Sigmoid colon (tissue), 7 donors: ENCODE measurements at regions of chr2 and their contacts with region 1.

Region 1: DNA sequence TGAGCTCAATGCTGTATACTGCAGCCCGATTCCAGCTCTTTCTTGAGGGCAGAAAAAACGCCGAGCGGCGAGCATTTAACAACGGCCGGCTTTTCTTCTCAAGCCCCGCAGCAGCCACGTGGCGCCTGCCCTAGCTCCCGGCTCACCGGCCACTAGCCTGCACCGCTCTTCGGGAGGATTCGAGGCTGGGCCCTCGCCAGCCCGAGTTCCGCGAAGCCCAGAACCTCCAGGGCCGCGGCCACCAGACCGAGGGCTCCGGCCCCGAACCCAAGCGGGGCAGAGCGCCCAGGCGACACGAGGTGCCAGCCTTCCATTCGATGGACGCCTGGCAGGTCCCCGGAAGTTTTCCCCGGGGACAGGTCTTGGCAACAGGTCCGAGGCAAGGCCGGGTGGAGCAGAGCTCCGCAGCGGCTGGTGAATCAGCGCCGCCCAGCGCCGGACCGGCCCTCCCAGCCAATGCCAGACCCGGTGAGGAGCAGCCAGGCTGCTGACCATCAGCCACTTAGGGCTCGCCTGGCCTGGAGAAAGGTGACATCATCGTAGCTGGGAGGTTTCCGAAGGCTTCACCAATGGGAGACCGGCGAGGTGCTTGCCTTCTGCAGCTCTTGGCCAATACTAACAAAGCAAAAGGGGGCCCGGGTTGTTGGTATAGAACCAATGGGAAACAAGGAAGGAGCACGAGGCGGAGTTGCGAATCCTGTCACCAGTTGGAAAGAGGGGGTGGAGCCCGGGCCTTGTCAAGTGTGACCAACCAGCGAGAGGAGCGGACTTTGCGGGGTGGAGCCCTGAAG is 544 bp upstream of the MXD1 start:
- DNase-seq: peak; percentile 100
- H3K4me3 ChIP-seq: peak overlapping the region; percentile 48 to 94 (median 90)
- H3K27ac ChIP-seq: peak overlapping the region; percentile 96 to 98 (median 98)
- H3K4me1 ChIP-seq: peaks cover 0 to 43% (median 22%) of the 10 kb centered on the region in 4 donors
- H3K27me3 ChIP-seq: no peaks in the 10 kb centered on the region
- CTCF ChIP-seq: no peak
- EP300 ChIP-seq: peak in 1 of 4 donors; percentile 1
- POLR2A ChIP-seq: peak; percentile 89 to 90

Region 2: GRCh38 chr2:69436938-69437750 is 477.2 kb before region 1 on chr2 and contains the start of gene NFU1:
- intact Hi-C with region 1: loop called (anchors 5 kb)
- DNase-seq: peak; percentile 98
- H3K4me3 ChIP-seq: peak within 1 kb of the TSS; percentile 77 to 92 (median 84)
- H3K27ac ChIP-seq: peak within 1 kb of the TSS; percentile 94 to 96 (median 94)
- H3K4me1 ChIP-seq: peaks cover 0 to 31% (median 22%) of the 10 kb centered on the region in 4 donors
- H3K27me3 ChIP-seq: no peaks in the 10 kb centered on the region
- CTCF ChIP-seq: peak; percentile 61 to 70 (median 65)
- EP300 ChIP-seq: peak in 1 of 4 donors; percentile 45
- POLR2A ChIP-seq: peak; percentile 54 to 71
- total RNA-seq, gene NFU1: 43.2 to 91.4 (median 74.2) TPM

Region 3: GRCh38 chr2:69817729-69818501 is 96.5 kb before region 1 on chr2:
- intact Hi-C with region 1: no loop called
- DNase-seq: no peak
- H3K4me3 ChIP-seq: no peak overlapping the region
- H3K27ac ChIP-seq: no peak overlapping the region
- H3K4me1 ChIP-seq: no peaks in the 10 kb centered on the region
- H3K27me3 ChIP-seq: no peaks in the 10 kb centered on the region
- CTCF ChIP-seq: no peak
- EP300 ChIP-seq: no peak
- POLR2A ChIP-seq: no peak

Region 4: DNA sequence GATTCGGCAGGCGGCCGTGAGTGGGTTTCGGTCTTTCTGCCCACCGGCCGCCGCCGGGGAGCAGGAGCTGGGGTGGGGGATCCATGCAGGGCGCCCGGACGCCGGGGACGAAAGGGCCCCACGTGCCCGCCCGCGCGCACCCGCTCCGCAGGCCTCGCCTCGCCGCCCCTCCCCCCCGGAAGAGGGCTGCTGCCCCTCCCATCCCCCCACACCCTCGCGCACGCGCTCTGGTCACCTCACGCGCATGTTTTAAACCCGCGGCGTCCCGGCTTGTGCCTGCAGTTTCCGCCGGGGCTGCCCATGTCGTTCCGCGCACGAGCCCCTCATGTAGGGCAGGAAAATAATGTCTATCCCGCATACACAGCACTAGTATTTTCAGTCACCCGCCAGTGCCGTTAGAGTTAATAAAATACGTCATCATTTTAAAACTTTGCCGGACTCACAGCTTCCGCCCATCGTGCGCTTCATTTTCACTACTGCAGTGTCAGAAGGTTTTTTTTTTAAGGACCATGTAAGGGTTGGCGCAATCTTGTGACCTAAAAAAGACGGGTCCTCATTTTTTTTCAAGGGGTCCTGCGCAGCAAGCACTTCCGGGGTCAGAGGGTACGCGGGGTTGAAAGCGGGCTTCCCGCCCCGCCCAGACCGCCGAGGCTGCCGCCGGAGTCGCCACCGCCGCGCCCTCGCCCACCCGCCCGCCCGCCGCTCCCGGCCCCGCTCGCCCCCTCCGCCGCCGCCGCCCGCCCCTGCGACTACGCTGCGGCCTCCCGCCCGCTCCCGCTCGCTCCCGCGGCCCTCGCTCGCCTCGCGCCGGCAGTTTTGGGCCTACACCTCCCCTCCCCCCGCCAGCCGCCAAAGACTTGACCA is 172.7 kb after region 1 on chr2 and contains the start of gene PCBP1:
- intact Hi-C with region 1: loop called (anchors 5 kb)
- DNase-seq: peak; percentile 98
- H3K4me3 ChIP-seq: peak within 1 kb of the TSS; percentile 63 to 87 (median 72)
- H3K27ac ChIP-seq: peak within 1 kb of the TSS; percentile 99 to 100 (median 99)
- H3K4me1 ChIP-seq: peaks cover 0 to 54% (median 47%) of the 10 kb centered on the region in 4 donors
- H3K27me3 ChIP-seq: no peaks in the 10 kb centered on the region
- CTCF ChIP-seq: no peak
- EP300 ChIP-seq: peak in 2 of 4 donors; percentile 22 to 28
- POLR2A ChIP-seq: peak; percentile 91 to 95
- total RNA-seq, gene PCBP1: 178 to 186 (median 182) TPM

Region 5: DNA sequence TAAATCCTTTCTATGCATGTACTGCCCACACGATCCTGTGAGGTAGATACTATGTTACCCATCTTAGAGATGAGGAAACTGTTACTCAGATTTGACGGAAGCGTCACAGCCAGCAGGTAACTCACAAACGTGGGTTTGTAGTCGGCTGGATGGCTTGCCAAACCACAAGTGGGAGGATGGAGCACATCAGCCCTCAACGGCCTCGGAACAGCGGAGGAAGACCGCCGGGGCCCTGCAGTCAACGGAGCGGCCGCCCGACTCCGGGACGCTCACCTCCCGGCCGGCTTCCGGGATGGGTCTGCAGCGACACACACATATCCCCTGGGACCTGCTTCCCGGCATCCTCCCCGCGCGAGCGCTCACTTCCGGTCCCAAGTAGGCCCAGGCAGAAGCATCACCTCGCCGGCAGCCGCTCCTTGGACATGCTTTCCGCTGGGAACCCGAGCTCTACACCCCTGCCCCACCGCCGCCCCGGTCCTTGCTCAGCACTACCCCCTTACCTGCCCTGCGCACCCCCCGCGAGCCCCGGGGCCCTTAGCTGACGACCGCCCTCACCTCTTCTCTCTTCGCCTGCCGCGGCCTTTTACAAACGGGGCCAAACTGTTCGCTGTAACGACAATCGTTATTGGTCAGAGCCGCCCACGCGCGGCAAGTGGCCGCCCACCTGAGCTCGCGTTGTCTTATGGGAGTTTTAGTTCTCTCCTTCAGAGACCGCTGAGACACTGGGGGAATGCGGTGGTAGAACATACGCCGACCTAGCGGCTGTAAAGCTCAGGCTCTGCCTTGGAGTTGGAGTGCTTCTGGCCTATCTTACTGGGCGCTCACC is 276.3 kb after region 1 on chr2 and contains the start of gene C2orf42:
- intact Hi-C with region 1: loop called (anchors 1 kb)
- DNase-seq: peak; percentile 98
- H3K4me3 ChIP-seq: peak within 1 kb of the TSS; percentile 77 to 91 (median 81)
- H3K27ac ChIP-seq: peak within 1 kb of the TSS; percentile 95 to 98 (median 96)
- H3K4me1 ChIP-seq: peaks cover 0 to 11% (median 5%) of the 10 kb centered on the region in 4 donors
- H3K27me3 ChIP-seq: no peaks in the 10 kb centered on the region
- CTCF ChIP-seq: no peak
- EP300 ChIP-seq: peak in 1 of 4 donors; percentile 18
- POLR2A ChIP-seq: peak; percentile 98 to 99
- total RNA-seq, gene C2orf42: 8.8 to 24.3 (median 21.8) TPM

Region 6: DNA sequence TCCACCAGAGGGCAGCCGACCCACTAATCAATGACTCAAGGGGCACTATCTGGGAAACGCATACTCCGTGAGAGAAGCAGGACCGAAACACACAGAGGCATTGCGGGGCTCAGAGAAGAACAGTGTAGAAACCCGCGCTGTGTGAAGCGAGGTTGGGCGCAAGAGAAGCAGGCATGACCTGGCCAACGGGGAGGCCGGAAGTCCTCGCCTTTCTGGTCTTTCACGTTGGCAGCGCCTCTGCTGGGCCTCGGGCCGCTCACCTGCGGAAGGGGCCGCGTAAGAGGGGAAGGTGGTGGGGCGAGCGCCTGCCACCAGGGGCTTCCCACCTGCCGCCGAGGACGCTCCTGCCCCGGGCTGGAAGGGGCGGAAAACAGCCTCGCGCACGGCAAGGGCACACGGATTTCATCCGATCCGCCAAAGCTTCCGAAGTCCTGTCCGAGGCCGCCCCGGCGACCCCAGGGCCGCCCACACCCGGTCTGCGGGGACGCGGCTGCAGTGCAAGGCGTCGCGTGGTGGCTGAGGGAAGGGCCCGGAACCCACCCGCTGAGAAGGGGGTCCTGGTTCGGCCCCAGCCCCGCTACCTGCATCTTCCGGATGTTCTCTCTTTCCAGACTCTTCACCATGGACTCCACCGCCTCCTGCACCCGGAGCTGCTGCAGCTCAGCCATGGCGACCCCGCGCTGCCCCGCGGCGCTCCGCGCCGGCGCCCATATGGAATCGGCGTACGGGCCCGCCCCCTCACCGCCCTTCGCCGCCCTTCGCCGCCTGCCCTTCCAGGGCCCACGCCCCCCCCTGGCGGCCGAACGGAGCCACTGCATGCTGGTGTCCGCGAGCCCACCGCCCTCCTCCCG is 387.2 kb after region 1 on chr2 and contains the start of gene FAM136A:
- intact Hi-C with region 1: loop called (anchors 5 kb)
- DNase-seq: peak; percentile 91
- H3K4me3 ChIP-seq: peak within 1 kb of the TSS; percentile 68 to 98 (median 90)
- H3K27ac ChIP-seq: peak within 1 kb of the TSS; percentile 81 to 90 (median 83)
- H3K4me1 ChIP-seq: peaks cover 0 to 22% (median 14%) of the 10 kb centered on the region in 4 donors
- H3K27me3 ChIP-seq: no peaks in the 10 kb centered on the region
- CTCF ChIP-seq: peak; percentile 82 to 99 (median 94)
- EP300 ChIP-seq: no peak
- POLR2A ChIP-seq: no peak
- total RNA-seq, gene FAM136A: 20.0 to 25.3 (median 24.1) TPM